ENCODE measurements at regions of chr20 and their contacts with region 1.

Region 1: GRCh38 chr20:53828682-53829254 is 235.1 kb upstream of the ZNF217 start:
- DNase-seq: peak; percentile 84
- H3K4me3 Mint-ChIP-seq: peak overlapping the region; percentile 66
- H3K27ac Mint-ChIP-seq: peak overlapping the region; percentile 98
- H3K4me1 Mint-ChIP-seq: peaks cover 37% of the 10 kb centered on the region
- H3K27me3 Mint-ChIP-seq: no peaks in the 10 kb centered on the region
- CTCF ChIP-seq: no peak

Region 2: GRCh38 chr20:53594068-53595017 is 234.4 kb before region 1 on chr20:
- CTCF ChIA-PET with region 1: interaction called, 5 read pairs
- POLR2A ChIA-PET with region 1: interaction called, 64 read pairs
- intact Hi-C with region 1: loop called (anchors 1 kb)
- DNase-seq: peak; percentile 90
- H3K4me3 Mint-ChIP-seq: peak overlapping the region; percentile 82
- H3K27ac Mint-ChIP-seq: peak overlapping the region; percentile 93
- H3K4me1 Mint-ChIP-seq: peaks cover 29% of the 10 kb centered on the region
- H3K27me3 Mint-ChIP-seq: no peaks in the 10 kb centered on the region
- CTCF ChIP-seq: peak; percentile 23

Region 3: DNA sequence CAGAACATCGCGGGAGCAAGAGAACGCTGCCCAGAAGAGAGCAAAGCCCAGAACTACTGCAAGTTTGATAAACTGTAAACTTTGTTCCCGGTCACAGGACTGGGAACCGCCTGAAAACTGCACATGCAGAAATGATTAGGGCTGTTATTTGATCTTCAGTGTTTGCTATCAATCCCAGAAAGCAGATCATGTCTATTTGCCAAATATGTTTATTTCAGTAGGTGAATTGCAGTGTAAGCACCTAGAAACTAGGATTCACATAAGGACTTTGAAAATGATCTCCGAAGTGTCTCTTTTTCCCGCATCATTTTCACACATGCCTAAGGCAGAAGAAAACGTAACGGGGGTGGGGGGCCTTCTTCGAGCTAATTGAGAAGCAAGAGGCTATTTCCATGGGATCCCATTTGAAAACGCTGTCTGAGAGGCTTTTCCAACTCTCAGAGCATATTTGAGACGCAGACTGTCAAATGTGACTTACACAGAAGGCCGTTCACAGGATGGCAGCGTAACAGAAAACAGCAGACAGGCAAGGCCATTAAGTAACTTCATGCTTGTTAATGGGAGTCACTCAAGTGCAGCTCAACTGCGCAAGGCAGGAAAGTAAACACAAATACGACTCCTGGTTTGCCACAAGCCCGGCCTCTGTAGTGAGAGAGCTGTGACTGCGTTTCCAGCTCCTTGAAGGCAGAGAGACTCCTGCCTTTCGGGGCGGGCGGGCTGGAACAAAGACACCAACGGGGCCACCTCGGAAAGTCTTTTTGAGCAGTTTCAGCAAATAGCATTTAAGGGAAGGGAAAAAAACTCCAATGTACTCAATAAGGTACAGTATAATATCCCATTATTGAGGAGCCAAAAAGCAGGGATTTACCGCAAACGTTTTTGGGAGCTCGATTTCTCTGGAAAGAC is 90.5 kb before region 1 on chr20:
- CTCF ChIA-PET with region 1: interaction called, 4 read pairs
- POLR2A ChIA-PET with region 1: interaction called, 18 read pairs
- intact Hi-C with region 1: loop called (anchors 5 kb)
- DNase-seq: no peak
- H3K4me3 Mint-ChIP-seq: no peak overlapping the region
- H3K27ac Mint-ChIP-seq: no peak overlapping the region
- H3K4me1 Mint-ChIP-seq: peaks cover 32% of the 10 kb centered on the region
- H3K27me3 Mint-ChIP-seq: no peaks in the 10 kb centered on the region
- CTCF ChIP-seq: no peak

Region 4: DNA sequence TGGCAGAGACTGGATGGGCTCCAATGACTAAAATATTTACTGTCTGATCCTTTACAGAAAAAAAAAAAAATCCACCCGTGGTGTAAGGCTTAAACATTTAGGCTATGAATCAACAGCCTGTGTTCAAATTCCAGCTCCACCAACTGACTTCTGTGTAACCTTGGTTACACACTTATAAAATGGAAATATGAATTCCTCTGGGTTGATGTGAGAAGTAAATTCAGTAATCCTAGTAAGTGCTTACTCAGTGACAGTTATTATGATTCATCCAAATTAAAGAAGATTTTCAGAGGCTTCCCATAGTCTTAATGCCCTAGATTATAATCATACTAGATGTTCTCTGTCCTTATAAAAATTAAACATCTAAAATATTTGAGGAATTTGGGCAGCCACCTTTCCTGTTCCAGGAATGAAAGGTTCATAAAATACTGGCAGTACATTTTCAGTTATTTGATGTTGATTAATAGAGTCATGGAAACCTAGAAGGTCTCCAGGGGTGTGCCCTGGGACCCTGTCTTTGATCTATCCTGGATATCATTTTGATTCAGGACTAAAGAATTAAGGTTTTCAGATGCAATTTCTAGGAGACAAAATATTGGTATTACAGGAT is 54.9 kb before region 1 on chr20:
- CTCF ChIA-PET with region 1: interaction called, 3 read pairs
- POLR2A ChIA-PET with region 1: interaction called, 11 read pairs
- intact Hi-C with region 1: loop called (anchors 1 kb)
- DNase-seq: peak; percentile 79
- H3K4me3 Mint-ChIP-seq: no peak overlapping the region
- H3K27ac Mint-ChIP-seq: peak overlapping the region; percentile 92
- H3K4me1 Mint-ChIP-seq: peaks cover 21% of the 10 kb centered on the region
- H3K27me3 Mint-ChIP-seq: no peaks in the 10 kb centered on the region
- CTCF ChIP-seq: no peak

Region 5: DNA sequence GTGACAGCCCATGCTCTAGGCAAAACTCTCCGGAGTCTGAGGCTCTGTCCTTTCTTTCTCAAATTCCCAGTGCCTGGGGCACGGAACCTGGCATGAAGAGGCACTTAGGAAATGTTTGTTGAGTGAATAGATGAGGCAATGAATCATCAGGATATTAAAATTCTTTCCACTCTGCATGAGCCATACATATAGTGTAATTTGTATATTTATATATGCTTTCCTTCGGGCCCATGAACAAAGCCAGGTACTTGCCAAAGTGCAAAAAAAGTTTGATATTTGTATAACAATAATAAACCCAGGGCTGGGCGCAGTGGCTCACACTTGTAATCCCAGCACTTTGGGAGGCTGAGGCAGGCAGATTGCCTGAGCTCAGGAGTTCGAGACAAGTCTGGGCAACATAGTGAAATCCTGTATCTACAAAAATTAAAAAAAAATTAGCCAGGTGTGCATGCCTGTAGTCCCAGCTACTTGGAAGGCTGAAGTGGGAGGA is 22.8 kb before region 1 on chr20:
- CTCF ChIA-PET with region 1: interaction called, 3 read pairs
- POLR2A ChIA-PET with region 1: interaction called, 27 read pairs
- intact Hi-C with region 1: no loop called
- DNase-seq: peak; percentile 95
- H3K4me3 Mint-ChIP-seq: peak overlapping the region; percentile 19
- H3K27ac Mint-ChIP-seq: peak overlapping the region; percentile 86
- H3K4me1 Mint-ChIP-seq: peaks cover 25% of the 10 kb centered on the region
- H3K27me3 Mint-ChIP-seq: no peaks in the 10 kb centered on the region
- CTCF ChIP-seq: no peak

Region 6: DNA sequence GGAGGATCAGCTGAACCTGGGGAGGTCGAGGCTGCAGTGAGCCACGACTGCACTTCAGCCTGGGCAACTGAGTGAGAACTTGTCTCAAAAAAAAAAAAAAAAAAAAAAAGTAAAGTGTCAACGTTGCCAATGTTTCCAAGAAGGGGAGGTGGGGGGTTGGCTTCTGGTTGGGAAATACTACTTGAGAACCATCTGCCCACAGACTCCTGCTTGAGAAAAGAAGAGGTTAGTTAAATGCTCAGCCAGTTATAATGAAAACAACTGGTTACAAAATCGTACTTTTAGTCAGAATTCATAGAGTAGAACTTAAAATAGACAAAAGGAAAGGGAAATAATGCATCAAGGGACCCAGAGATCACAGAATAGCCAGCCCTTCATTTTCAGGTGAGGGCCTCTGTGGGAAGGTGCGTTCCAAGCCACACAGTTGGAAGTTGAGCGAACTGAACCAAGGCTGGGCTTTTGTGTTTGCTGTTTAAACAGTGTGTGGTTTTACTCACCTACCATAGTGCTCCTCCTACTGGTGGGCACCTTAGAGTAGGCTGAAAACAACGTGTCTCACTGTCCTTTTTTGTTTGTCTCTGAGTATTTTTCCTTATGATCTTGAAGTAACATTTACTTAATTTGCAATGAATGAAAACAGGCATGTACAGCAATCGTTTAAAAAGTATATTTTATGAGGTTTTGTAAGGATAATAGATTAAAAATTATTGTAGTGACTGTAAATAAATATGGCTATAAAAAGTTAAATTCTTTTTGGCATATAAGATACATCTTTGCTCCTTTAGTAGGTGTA is 40.9 kb after region 1 on chr20:
- CTCF ChIA-PET with region 1: interaction called, 8 read pairs
- POLR2A ChIA-PET with region 1: interaction called, 88 read pairs
- intact Hi-C with region 1: loop called (anchors 1 kb)
- DNase-seq: peak; percentile 90
- H3K4me3 Mint-ChIP-seq: peak overlapping the region; percentile 36
- H3K27ac Mint-ChIP-seq: peak overlapping the region; percentile 96
- H3K4me1 Mint-ChIP-seq: peaks cover 49% of the 10 kb centered on the region
- H3K27me3 Mint-ChIP-seq: no peaks in the 10 kb centered on the region
- CTCF ChIP-seq: peak; percentile 65

Region 7: GRCh38 chr20:53905019-53905847 is 76.5 kb after region 1 on chr20:
- CTCF ChIA-PET with region 1: interaction called, 3 read pairs
- POLR2A ChIA-PET with region 1: interaction called, 30 read pairs
- intact Hi-C with region 1: loop called (anchors 1 kb)
- DNase-seq: no peak
- H3K4me3 Mint-ChIP-seq: no peak overlapping the region
- H3K27ac Mint-ChIP-seq: peak overlapping the region; percentile 93
- H3K4me1 Mint-ChIP-seq: peaks cover 52% of the 10 kb centered on the region
- H3K27me3 Mint-ChIP-seq: no peaks in the 10 kb centered on the region
- CTCF ChIP-seq: no peak

Region 8: DNA sequence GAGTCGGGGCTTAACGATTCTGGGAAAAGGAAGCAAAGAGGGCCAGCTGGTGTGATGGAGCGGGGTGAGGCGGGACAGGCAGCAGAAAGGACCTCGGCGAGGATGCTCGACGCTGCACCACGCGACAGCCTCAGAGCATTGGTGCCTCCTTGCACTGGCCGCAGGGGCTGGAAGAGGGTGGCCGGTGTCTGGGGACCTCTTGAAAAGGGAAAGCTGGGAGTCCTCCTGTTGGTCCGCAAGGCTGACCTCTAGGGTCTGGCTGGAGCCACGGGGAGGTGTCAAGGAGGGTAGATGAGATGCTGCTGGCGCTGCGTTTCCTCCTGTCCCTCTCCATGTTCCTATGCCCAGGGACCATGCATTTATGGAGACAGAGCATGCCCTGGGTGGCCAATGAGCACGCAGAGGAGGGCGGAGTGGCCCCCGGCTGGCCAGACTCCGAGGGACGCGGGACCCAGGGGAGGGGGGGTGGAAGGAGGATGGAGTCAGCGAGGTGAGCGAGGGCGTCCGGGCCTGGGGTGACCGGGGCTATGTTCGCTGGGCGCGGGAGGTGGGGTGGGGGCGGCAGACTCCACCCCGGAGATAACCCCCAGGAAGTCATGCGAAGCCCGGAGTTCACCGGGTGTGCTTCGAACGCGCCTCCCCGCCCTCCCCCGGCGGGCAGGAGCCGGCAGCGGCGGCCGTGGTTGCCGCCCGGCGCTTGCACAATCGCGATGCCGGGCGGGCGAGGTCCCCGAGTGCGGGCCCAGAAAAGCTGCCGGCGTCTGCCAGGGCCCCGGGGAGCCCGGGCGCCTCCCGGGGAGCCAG is 345.1 kb after region 1 on chr20 and contains the start of gene CYP24A1:
- CTCF ChIA-PET with region 1: no interaction called
- POLR2A ChIA-PET with region 1: no interaction called
- intact Hi-C with region 1: no loop called
- DNase-seq: peak; percentile 41
- H3K4me3 Mint-ChIP-seq: peak within 1 kb of the TSS; percentile 67
- H3K27ac Mint-ChIP-seq: no peak within 1 kb of the TSS
- H3K4me1 Mint-ChIP-seq: peaks cover 20% of the 10 kb centered on the region
- H3K27me3 Mint-ChIP-seq: no peaks in the 10 kb centered on the region
- CTCF ChIP-seq: no peak
- total RNA-seq, gene CYP24A1: 0.28 and 0.34 TPM in 2 replicates